ENCODE measurements at regions of chr13 and their contacts with region 1.

Region 1: GRCh38 chr13:26985285-26985878 is 186.2 kb downstream of the USP12 start:
- DNase-seq: peak in 4 of 5 donors; percentile 62 to 74 (median 70)
- ATAC-seq: peak in 3 of 4 donors; percentile 69 to 73 (median 73)
- H3K4me3 ChIP-seq: no peak overlapping the region
- H3K27ac ChIP-seq: peak overlapping the region in 1 of 12 donors; percentile 87
- H3K4me1 ChIP-seq: peaks cover 0 to 25% (median 12%) of the 10 kb centered on the region in 12 donors
- H3K27me3 ChIP-seq: no peaks in the 10 kb centered on the region
- CTCF ChIP-seq: peak; percentile 61 to 86 (median 79)
- POLR2A ChIP-seq: no peak

Region 2: DNA sequence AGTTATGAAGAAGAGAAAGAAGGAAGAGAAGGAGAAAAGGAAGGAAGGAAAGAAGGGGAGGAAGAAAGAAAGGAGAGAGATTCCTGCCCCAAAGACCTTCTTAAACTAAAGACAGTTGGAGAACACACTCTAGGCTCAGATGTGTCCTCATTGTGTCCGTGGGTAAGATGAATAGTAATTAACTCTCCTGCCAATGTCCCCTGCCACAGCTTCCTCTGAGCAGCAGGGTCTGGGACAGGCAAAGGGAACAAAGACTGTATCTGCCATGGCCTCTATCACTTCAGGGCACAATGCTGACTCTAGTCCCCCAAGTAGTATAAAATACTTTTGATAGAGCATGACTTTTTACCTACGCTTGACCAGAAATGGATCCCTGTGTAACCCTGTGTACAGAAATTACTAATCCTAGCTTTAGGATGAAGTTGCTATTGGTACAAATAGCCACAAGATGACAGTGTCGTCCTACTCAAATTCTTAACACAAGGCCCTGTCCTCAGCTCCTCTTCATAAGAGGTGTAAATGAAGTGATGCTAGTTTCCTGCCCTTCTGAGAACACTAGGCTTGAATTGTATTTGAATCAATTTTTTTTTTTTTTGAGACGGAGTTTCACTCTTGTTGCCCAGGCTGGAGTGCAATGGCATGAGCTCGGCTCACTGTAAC is 38.6 kb before region 1 on chr13:
- intact Hi-C with region 1: loop called in 4 of 10 experiments (anchors 2 to 5 kb)
- DNase-seq: no peak
- ATAC-seq: peak; percentile 71 to 81 (median 78)
- H3K4me3 ChIP-seq: no peak overlapping the region
- H3K27ac ChIP-seq: no peak overlapping the region
- H3K4me1 ChIP-seq: peaks cover 0 to 11% (median 1%) of the 10 kb centered on the region in 12 donors
- H3K27me3 ChIP-seq: no peaks in the 10 kb centered on the region
- CTCF ChIP-seq: peak; percentile 58 to 85 (median 76)
- POLR2A ChIP-seq: no peak

Region 3: GRCh38 chr13:27203854-27204253 is 218.5 kb after region 1 on chr13:
- intact Hi-C with region 1: loop called in 8 of 10 experiments (anchors 2 to 10 kb)
- DNase-seq: no peak
- ATAC-seq: peak in 1 of 4 donors; percentile 47
- H3K4me3 ChIP-seq: no peak overlapping the region
- H3K27ac ChIP-seq: no peak overlapping the region
- H3K4me1 ChIP-seq: no peaks in the 10 kb centered on the region
- H3K27me3 ChIP-seq: no peaks in the 10 kb centered on the region
- CTCF ChIP-seq: peak in 7 of 12 donors; percentile 14 to 49 (median 31)
- POLR2A ChIP-seq: no peak

Region 4: DNA sequence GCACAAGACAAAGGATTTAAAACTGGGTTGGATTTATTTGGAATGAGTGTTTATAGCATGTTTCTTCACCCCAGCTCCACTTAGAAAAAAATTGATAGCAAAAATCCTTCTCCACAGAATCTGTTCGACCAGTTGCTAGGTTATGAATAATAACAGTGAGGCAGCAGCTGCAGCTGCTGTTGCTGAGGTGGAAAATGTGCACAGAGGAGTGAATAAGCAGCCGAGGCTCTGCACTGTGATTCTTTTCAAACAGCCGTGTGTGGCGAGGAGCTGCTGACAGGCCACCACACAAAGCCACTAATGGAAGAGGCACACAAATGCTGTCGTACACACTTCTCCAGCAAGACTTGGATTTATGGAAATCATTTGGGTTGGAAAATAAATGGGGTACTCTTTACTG is 278.8 kb after region 1 on chr13:
- intact Hi-C with region 1: loop called in 1 of 10 experiments (anchors 10 kb)
- DNase-seq: peak in 1 of 5 donors; percentile 47
- ATAC-seq: peak; percentile 67 to 81 (median 76)
- H3K4me3 ChIP-seq: no peak overlapping the region
- H3K27ac ChIP-seq: peak overlapping the region in 8 of 12 donors; percentile 36 to 63 (median 43)
- H3K4me1 ChIP-seq: peaks cover 0 to 46% (median 16%) of the 10 kb centered on the region in 12 donors
- H3K27me3 ChIP-seq: no peaks in the 10 kb centered on the region
- CTCF ChIP-seq: no peak
- POLR2A ChIP-seq: no peak

Region 5: GRCh38 chr13:27283906-27284493 is 298.6 kb after region 1 on chr13:
- intact Hi-C with region 1: loop called in 7 of 10 experiments (anchors 2 to 10 kb)
- DNase-seq: no peak
- ATAC-seq: peak; percentile 71 to 83 (median 78)
- H3K4me3 ChIP-seq: no peak overlapping the region
- H3K27ac ChIP-seq: no peak overlapping the region
- H3K4me1 ChIP-seq: no peaks in the 10 kb centered on the region
- H3K27me3 ChIP-seq: no peaks in the 10 kb centered on the region
- CTCF ChIP-seq: peak in 11 of 12 donors; percentile 19 to 60 (median 40)
- POLR2A ChIP-seq: no peak

Region 6: DNA sequence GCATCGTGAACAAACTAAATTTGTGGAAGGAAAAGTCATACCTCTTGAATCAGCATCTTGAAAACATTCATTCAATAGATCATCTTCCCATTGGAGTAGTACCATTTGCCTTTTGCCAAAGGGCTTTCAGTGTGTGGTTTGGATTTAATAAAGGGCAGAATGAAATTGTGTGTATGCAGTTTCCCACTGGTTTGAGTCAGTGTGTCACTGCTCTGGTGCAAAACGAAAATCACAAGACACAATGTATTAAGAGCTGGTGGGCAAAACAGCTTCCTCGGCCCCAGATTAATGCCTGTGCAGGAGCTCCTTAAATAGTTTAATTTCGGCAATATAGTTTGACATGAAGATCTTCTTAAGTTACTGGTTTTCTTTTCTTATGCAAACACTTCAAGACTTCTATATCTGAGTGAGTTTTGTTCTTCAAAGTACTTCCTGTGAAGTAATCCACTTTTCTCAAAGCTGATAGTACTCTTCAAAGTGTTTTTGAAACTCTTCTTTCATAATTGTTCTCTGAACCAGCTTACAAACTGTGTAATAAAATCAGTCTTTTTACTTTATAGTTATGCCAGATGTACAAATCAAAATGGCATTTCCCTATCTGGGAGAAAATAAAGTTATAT is 317.4 kb after region 1 on chr13:
- intact Hi-C with region 1: no loop called
- DNase-seq: no peak
- ATAC-seq: no peak
- H3K4me3 ChIP-seq: no peak overlapping the region
- H3K27ac ChIP-seq: no peak overlapping the region
- H3K4me1 ChIP-seq: no peaks in the 10 kb centered on the region
- H3K27me3 ChIP-seq: peaks cover 0 to 4% (median 0%) of the 10 kb centered on the region in 9 donors
- CTCF ChIP-seq: no peak
- POLR2A ChIP-seq: no peak

Region 7: DNA sequence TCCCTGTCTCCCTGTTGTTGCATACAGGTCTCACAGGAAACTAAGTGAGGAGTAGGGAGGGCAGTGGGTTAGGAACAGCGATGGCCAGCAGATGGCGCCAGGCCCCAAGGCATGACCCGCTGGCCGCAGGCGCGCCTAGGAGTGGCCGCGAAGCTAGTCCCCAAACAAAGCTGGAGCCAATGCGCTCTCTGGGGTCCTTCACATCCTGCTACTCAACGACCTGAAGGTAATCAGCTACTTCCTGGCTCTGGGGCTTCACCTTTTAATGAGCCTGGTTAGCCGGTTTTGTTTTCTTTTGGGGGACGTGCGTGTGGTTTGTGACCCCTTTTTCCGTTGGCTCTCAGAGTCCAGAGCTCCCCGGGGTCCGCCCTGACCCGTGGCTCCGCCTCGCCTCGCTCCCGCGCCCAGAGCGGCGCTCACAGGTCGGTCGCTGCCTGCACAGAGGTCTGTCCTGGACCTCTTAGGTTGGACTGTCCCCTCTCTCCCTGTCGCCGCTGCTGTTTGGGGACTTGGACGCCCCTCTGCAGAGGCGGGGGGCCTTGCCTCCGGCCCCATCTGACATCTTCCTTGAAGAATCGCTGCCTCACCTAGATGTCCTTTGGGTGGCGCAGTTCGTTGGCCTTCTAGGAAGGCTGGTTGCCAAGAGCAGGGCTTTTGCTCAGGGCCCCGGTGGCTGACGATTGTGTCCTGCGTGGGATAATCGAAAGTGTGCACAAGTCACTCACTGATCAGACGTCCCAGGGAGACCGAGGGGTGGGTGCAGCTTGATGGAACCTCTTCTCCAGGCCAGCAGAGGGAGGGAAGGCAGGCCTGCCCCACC is 376.9 kb after region 1 on chr13:
- intact Hi-C with region 1: loop called in 9 of 10 experiments (anchors 1 to 2 kb)
- DNase-seq: peak; percentile 77 to 92 (median 84)
- ATAC-seq: peak; percentile 85 to 96 (median 95)
- H3K4me3 ChIP-seq: peak overlapping the region in 11 of 12 donors; percentile 17 to 62 (median 50)
- H3K27ac ChIP-seq: no peak overlapping the region
- H3K4me1 ChIP-seq: peaks cover 0 to 9% (median 5%) of the 10 kb centered on the region in 12 donors
- H3K27me3 ChIP-seq: peaks cover 0 to 15% (median 0%) of the 10 kb centered on the region in 9 donors
- CTCF ChIP-seq: peak; percentile 84 to 98 (median 94)
- POLR2A ChIP-seq: no peak

Region 8: DNA sequence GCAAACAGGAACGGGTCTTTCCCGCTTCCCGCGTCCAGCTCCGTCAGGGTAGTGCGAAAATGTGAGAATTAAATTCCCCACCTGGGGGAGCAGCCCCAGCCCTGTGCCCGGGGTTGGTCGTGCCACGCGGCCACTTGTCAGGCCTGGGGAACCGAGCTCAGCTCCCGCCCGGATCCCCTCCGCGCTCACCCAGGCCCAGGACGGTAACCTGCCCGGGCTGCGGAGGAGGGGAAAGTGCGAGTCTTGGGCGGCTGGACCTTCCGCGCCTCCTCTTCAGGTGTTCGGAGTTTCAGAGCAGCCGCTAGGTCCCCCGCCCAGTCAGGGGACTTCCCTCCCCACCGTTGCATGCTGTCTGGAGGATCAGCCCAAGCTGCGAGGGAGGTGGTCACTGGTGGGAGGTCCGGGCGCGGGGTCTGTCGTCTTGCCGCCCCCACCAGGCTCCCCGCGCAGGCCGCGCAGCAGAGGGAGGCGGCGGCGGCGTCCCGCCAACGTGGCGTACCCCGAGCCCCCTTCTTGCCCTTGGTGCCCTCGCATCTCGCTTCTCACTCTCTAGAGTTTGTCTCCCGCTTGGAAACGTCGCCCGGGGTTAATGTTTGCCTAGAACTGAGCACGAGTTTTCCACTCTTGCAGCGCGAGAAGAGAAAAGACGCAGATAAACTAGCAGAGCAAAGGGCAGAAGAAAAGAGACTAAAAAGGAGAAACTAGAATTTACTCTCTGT is 995.1 kb after region 1 on chr13:
- intact Hi-C with region 1: loop called in 1 of 10 experiments (anchors 10 kb)
- DNase-seq: no peak
- ATAC-seq: no peak
- H3K4me3 ChIP-seq: no peak overlapping the region
- H3K27ac ChIP-seq: no peak overlapping the region
- H3K4me1 ChIP-seq: peaks cover 0 to 37% (median 11%) of the 10 kb centered on the region in 12 donors
- H3K27me3 ChIP-seq: peaks cover 67 to 99% (median 89%) of the 10 kb centered on the region in 9 donors
- CTCF ChIP-seq: no peak
- POLR2A ChIP-seq: no peak

Measured in heart left ventricle (tissue), 16 donors.